ENCODE measurements at regions of chr16 and their contacts with region 1.

Region 1: GRCh38 chr16:89860747-89861304 is 12.6 kb upstream of the TCF25 start:
- DNase-seq: no peak
- ATAC-seq: peak; percentile 86
- H3K4me3 ChIP-seq: no peak overlapping the region
- H3K27ac ChIP-seq: no peak overlapping the region
- H3K4me1 ChIP-seq: peaks cover 22% of the 10 kb centered on the region
- H3K27me3 ChIP-seq: no peaks in the 10 kb centered on the region; a peak in 1 of 4 replicates
- CTCF ChIP-seq: peak; percentile 93 to 99 (median 98)
- EP300 ChIP-seq: no peak
- POLR2A ChIP-seq: no peak
- RAD21 ChIP-seq: peak; percentile 87

Region 2: GRCh38 chr16:89708441-89708931 is 152.3 kb before region 1 on chr16:
- CTCF ChIA-PET with region 1: interaction called, 119 read pairs
- POLR2A ChIA-PET with region 1: interaction called, 9 read pairs
- RAD21 ChIA-PET with region 1: interaction called, 60 read pairs
- SMC1A ChIA-PET with region 1: interaction called, 44 read pairs
- in situ Hi-C with region 1: loop called (anchors 5 kb)
- intact Hi-C with region 1: no loop called
- DNase-seq: no peak
- ATAC-seq: no peak
- H3K4me3 ChIP-seq: no peak overlapping the region
- H3K27ac ChIP-seq: no peak overlapping the region
- H3K4me1 ChIP-seq: no peaks in the 10 kb centered on the region
- H3K27me3 ChIP-seq: no peaks in the 10 kb centered on the region
- CTCF ChIP-seq: no peak
- EP300 ChIP-seq: no peak
- POLR2A ChIP-seq: no peak
- RAD21 ChIP-seq: no peak

Region 3: DNA sequence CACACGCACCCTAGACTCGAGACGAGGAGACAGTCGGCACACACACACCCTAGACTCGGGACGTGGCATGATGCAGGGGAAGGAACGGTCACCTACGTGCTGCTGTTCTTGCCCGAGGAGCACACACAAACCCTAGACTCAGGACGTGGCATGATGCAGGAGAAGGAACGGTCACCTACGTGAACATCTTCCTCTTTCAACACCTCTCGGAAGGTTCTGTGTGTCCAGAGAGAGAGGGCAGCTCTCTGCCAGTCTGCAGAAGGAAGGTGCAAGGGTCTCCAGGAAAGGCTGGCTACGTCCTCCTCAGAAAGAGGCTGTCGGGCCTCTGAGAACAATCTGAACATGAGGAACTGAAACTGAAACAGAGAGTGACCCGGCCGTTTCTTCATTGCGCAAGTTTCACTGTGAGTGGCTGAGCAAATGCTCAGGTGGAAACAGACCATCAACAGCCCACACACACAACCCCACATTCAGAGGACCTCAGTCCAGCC is 96.1 kb before region 1 on chr16:
- CTCF ChIA-PET with region 1: interaction called, 12 read pairs
- POLR2A ChIA-PET with region 1: no interaction called
- RAD21 ChIA-PET with region 1: interaction called, 4 read pairs
- SMC1A ChIA-PET with region 1: interaction called, 6 read pairs
- in situ Hi-C with region 1: no loop called
- intact Hi-C with region 1: no loop called
- DNase-seq: peak; percentile 91
- ATAC-seq: peak; percentile 95
- H3K4me3 ChIP-seq: peak overlapping the region; percentile 34; the same call in 1 of the 2 replicates
- H3K27ac ChIP-seq: peak overlapping the region; percentile 83
- H3K4me1 ChIP-seq: peaks cover 50% of the 10 kb centered on the region
- H3K27me3 ChIP-seq: no peaks in the 10 kb centered on the region
- CTCF ChIP-seq: no peak
- EP300 ChIP-seq: peak; percentile 73 to 98; a peak in 3 of 4 replicates
- POLR2A ChIP-seq: peak; percentile 69; the same call in 1 of the 2 replicates
- RAD21 ChIP-seq: no peak

Region 4: GRCh38 chr16:89815639-89816348 is 45.0 kb before region 1 on chr16:
- CTCF ChIA-PET with region 1: interaction called, 15 read pairs
- POLR2A ChIA-PET with region 1: no interaction called
- RAD21 ChIA-PET with region 1: interaction called, 3 read pairs
- SMC1A ChIA-PET with region 1: interaction called, 3 read pairs
- in situ Hi-C with region 1: no loop called
- intact Hi-C with region 1: loop called (anchors 2 kb)
- DNase-seq: no peak
- ATAC-seq: no peak; the same call in 1 of the 3 replicates
- H3K4me3 ChIP-seq: peak overlapping the region; percentile 65
- H3K27ac ChIP-seq: peak overlapping the region; percentile 77
- H3K4me1 ChIP-seq: peaks cover 9% of the 10 kb centered on the region
- H3K27me3 ChIP-seq: no peaks in the 10 kb centered on the region
- CTCF ChIP-seq: no peak
- EP300 ChIP-seq: no peak
- POLR2A ChIP-seq: no peak
- RAD21 ChIP-seq: no peak

Region 5: DNA sequence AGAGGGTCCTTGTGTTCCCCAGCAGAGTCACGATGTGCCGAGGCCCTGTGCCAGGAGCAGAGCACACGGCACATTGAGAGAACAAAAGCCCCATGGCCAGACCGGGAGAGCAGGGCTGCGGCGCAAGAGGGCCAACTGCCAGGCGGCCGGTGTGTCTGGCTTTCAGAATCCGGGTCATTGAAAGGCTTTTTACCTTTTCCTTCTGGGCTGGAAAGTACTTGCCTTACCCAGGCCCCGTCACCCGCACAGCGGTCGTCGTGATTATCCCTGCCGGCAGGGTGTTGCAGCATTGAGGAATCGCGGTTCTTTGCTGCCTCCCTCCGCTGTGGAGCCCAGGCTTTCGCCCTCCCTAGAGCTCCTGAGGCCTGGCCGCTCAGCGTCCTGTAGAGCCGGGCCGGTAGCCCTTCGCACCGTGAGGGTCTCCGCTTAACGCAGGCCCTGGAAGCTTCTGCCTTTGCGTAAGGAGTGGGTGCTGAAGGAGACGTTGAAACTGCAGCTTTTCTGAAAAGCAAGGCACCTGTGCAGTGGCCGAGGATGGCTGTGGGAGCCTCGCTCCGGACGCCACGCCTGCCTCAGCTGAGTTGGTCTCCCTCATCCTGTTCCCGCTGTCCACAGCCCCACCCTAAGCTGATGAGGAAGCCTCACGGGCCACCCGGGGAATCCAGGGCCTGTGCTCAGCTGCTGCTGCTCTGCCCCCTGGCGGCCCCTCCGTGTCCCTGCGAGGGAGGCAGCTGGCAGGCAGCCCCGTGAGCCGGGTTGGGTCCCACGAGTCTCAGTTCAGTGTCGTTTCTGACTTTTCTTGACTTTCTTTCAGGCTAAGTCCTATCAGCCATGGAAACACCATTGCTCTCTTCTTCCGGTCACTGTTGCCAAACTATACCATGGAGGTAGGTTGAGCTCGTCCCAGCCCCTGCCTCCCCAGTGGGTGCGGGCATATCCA is 49.2 kb after region 1 on chr16:
- CTCF ChIA-PET with region 1: interaction called, 10 read pairs
- POLR2A ChIA-PET with region 1: no interaction called
- RAD21 ChIA-PET with region 1: interaction called, 6 read pairs
- SMC1A ChIA-PET with region 1: interaction called, 5 read pairs
- in situ Hi-C with region 1: no loop called
- intact Hi-C with region 1: no loop called
- DNase-seq: no peak
- ATAC-seq: peak; percentile 96
- H3K4me3 ChIP-seq: no peak overlapping the region
- H3K27ac ChIP-seq: no peak overlapping the region
- H3K4me1 ChIP-seq: no peaks in the 10 kb centered on the region
- H3K27me3 ChIP-seq: no peaks in the 10 kb centered on the region
- CTCF ChIP-seq: peak; percentile 79 to 92 (median 92)
- EP300 ChIP-seq: no peak
- POLR2A ChIP-seq: peak; percentile 18; the same call in 1 of the 2 replicates
- RAD21 ChIP-seq: peak; percentile 59

Measured in GM12878 (cell line).